AG04450 (cell line): ENCODE measurements at regions of chrX and their contacts with region 1.

Region 1: DNA sequence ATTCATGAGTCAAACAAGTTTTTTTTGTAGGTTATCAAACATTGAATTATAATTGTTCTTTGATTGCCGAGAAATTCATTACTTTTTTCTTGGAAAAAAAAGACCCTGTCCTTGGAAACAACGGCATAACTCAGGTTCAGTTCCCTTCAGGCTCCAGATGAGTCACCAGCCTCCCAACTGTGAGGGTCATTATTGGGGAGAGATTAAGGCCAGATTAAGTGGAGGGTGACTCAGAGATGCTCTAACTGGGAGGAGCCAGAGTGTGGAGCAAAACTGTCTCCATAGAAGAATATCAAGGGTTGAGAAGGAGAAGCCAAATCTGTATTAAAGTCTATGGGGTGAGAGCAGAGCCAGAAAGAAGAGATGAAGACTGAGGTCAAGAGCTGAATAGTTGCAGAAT is 9.7 kb downstream of the ADGRG4 start:
- DNase-seq: no peak
- H3K4me3 ChIP-seq: no peak overlapping the region
- H3K27ac ChIP-seq: no peak overlapping the region
- H3K27me3 ChIP-seq: no peaks in the 10 kb centered on the region
- CTCF ChIP-seq: no peak

Region 2: DNA sequence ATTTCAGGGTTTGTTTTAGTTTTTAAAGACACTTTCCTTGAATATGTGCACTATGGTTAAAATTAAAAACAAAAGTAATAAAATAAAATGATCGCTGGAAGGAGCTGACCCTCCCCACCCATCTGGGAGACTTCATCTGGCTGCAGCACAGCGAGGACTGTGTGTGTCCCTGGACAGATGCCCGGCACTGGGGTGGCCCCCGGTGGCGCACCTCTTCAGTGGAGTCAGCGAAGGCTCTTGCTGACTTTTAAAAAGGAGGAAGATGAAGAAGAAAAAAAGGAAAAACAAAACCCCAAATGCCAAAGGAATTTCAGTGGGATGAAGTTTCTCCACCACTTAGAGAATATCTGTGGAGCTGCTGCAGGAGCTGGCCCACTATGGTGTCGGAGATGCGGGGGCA is 15.0 kb before region 1 on chrX:
- CTCF ChIA-PET with region 1: no interaction called
- POLR2A ChIA-PET with region 1: no interaction called
- DNase-seq: no peak
- H3K4me3 ChIP-seq: no peak overlapping the region
- H3K27ac ChIP-seq: no peak overlapping the region
- H3K27me3 ChIP-seq: no peaks in the 10 kb centered on the region
- CTCF ChIP-seq: no peak

Region 3: DNA sequence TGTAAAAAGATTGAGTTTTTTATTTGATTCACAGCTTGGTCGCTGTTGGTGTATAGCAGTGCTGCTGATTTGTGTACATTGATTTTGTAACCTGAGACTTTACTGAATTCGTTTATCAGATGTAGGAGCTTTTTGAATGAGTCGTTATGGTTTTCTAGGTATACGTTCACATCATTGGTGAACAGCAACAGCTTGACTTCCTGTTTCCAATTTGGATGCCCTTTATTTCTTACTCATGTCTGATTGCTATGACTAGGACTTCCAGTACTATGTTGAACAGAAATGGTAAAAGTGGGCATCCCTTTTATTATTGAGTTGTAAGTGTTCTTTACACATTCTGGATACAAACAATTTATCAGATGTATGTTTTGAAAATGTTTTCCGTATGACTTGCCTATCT is 66.3 kb after region 1 on chrX:
- CTCF ChIA-PET with region 1: no interaction called
- POLR2A ChIA-PET with region 1: interaction called, 10 read pairs
- DNase-seq: no peak
- H3K4me3 ChIP-seq: no peak overlapping the region
- H3K27ac ChIP-seq: no peak overlapping the region
- H3K27me3 ChIP-seq: no peaks in the 10 kb centered on the region
- CTCF ChIP-seq: no peak

Region 4: GRCh38 chrX:136387951-136388502 is 77.6 kb after region 1 on chrX:
- CTCF ChIA-PET with region 1: no interaction called
- POLR2A ChIA-PET with region 1: no interaction called
- DNase-seq: no peak
- H3K4me3 ChIP-seq: no peak overlapping the region
- H3K27ac ChIP-seq: no peak overlapping the region
- H3K27me3 ChIP-seq: no peaks in the 10 kb centered on the region
- CTCF ChIP-seq: no peak